CD4-positive, alpha-beta T cell (primary cell): ENCODE measurements at regions of chr3 and their contacts with region 1.

Region 1: DNA sequence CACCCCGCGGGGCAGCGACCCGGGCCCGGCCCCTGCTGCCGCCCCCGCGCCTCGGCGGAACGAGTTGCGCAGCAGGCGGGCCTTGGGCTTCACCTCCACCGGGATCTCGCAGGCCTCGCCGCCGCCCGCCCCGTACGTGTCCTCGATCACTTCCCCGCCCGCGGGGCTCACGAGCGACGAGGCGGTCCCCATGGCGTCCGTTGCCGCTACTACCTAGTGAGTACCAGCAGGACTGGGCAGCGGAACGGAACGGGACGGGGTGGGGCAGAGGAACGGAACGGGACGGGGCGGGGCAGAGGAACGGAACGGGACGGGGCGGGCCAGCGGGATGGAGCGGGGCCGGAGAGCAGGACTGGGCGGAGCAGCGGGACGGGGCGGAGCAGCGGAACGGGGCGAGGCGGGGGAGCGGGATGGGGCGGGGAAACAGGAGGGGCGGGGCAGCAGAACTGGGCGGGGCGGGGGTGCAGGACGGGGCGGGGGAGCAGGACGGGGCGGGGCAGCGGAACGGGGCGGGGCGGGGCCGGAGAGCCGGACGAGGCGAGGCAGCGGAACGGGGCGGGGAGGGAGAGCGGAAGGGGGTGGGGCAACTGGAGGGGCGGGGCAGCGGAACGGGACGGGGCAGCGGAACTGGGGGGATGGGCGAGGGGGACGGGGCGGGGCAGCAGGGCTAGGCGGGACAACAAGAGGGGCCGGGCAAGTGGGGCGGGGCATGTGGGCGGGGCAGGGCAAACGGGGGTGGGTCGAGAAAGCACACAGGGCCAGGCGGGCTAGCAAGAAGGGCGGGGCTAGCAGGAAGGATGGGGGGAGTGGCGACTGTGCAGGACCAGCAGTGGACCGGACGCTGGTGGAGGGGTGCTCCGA is at the start of gene NPHP3:
- DNase-seq: peak; percentile 90 to 100 (median 98)
- ATAC-seq: peak; percentile 77
- H3K4me3 ChIP-seq: peak within 1 kb of the TSS; percentile 89
- H3K4me3 Mint-ChIP-seq: peak within 1 kb of the TSS; percentile 96
- H3K27ac ChIP-seq: peak within 1 kb of the TSS; percentile 43 to 46
- H3K27ac Mint-ChIP-seq: peak within 1 kb of the TSS; percentile 93
- H3K4me1 ChIP-seq: peaks cover 25% of the 10 kb centered on the region
- H3K4me1 Mint-ChIP-seq: peaks cover 50% of the 10 kb centered on the region
- H3K27me3 ChIP-seq: no peaks in the 10 kb centered on the region
- H3K27me3 Mint-ChIP-seq: no peaks in the 10 kb centered on the region
- CTCF ChIP-seq: no peak
- total RNA-seq, gene NPHP3: 25.5 to 27.4 TPM

Region 2: DNA sequence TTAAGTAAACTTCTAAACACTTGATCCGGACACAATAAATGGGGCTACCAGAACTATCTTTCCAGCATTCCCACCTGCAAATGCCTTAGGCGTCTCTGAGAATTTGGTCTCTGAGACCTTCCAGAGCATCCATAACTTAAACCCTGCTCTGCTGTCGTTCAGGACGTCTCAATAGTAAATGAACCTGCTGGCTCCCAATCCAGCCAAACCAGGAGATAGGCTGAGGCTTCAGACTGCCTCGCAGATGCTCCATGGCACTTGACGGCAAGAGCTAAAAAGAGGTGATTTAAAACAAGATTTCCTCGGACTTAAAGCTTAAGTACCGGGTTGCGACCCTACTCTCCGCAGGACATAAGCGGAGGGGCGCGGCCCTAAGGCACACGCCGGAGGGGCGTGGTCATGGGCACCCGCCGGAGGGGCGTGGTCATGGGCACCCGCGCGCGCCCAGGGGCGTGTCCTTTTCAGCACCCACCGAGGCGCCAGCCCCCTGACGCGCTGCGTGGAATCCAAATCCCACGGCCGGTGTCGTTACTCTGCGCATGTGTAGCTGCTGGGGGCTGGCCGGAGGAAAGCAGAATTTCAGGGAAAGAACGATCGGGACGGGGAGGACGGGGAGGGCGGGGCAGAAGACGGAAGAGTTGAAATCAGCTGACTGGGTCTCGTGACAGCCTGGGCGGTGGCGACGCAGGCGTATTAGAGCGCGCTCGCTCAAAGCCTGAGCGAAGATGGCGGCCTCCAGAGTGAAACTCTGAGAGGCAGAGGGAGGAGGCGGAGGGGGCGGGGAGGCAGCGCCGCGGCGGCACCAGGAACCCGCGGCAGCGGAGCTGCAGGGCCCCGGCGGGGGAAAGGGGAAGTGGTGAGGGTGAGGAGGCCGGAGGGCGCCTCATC is 305.3 kb before region 1 on chr3 and contains the start of gene DNAJC13:
- CTCF ChIA-PET with region 1: interaction called, 3 read pairs
- POLR2A ChIA-PET with region 1: interaction called, 3 read pairs
- intact Hi-C with region 1: loop called in 1 of 2 experiments (anchors 2 kb)
- DNase-seq: peak; percentile 81 to 98 (median 89)
- ATAC-seq: peak; percentile 93
- H3K4me3 ChIP-seq: peak within 1 kb of the TSS; percentile 91
- H3K4me3 Mint-ChIP-seq: peak within 1 kb of the TSS; percentile 97
- H3K27ac ChIP-seq: peak within 1 kb of the TSS; percentile 76 to 81
- H3K27ac Mint-ChIP-seq: peak within 1 kb of the TSS; percentile 91
- H3K4me1 ChIP-seq: peaks cover 12% of the 10 kb centered on the region
- H3K4me1 Mint-ChIP-seq: peaks cover 34% of the 10 kb centered on the region
- H3K27me3 ChIP-seq: no peaks in the 10 kb centered on the region
- H3K27me3 Mint-ChIP-seq: no peaks in the 10 kb centered on the region
- CTCF ChIP-seq: no peak
- total RNA-seq, gene DNAJC13: 13.5 to 14.3 TPM

Region 3: GRCh38 chr3:132554437-132554836 is 168.0 kb before region 1 on chr3:
- CTCF ChIA-PET with region 1: no interaction called
- POLR2A ChIA-PET with region 1: no interaction called
- intact Hi-C with region 1: no loop called
- DNase-seq: no peak
- ATAC-seq: no peak
- H3K4me3 ChIP-seq: no peak overlapping the region
- H3K4me3 Mint-ChIP-seq: no peak overlapping the region
- H3K27ac ChIP-seq: no peak overlapping the region
- H3K27ac Mint-ChIP-seq: no peak overlapping the region
- H3K4me1 ChIP-seq: no peaks in the 10 kb centered on the region
- H3K4me1 Mint-ChIP-seq: peaks cover 21% of the 10 kb centered on the region
- H3K27me3 ChIP-seq: no peaks in the 10 kb centered on the region
- H3K27me3 Mint-ChIP-seq: no peaks in the 10 kb centered on the region
- CTCF ChIP-seq: no peak

Region 4: GRCh38 chr3:133014311-133014710 is 291.9 kb after region 1 on chr3:
- CTCF ChIA-PET with region 1: no interaction called
- POLR2A ChIA-PET with region 1: no interaction called
- intact Hi-C with region 1: no loop called
- DNase-seq: no peak
- ATAC-seq: no peak
- H3K4me3 ChIP-seq: no peak overlapping the region
- H3K4me3 Mint-ChIP-seq: no peak overlapping the region
- H3K27ac ChIP-seq: no peak overlapping the region
- H3K27ac Mint-ChIP-seq: no peak overlapping the region
- H3K4me1 ChIP-seq: no peaks in the 10 kb centered on the region
- H3K4me1 Mint-ChIP-seq: no peaks in the 10 kb centered on the region
- H3K27me3 ChIP-seq: peaks cover 0 to 4% of the 10 kb centered on the region in 2 experiments
- H3K27me3 Mint-ChIP-seq: peaks cover 6% of the 10 kb centered on the region
- CTCF ChIP-seq: no peak

Region 5: GRCh38 chr3:133494469-133494868 is 772.1 kb after region 1 on chr3:
- CTCF ChIA-PET with region 1: no interaction called
- POLR2A ChIA-PET with region 1: interaction called, 4 read pairs
- intact Hi-C with region 1: loop called in 1 of 2 experiments (anchors 5 kb)
- DNase-seq: peak in 2 of 14 experiments; percentile 12 to 22
- ATAC-seq: no peak
- H3K4me3 ChIP-seq: no peak overlapping the region
- H3K4me3 Mint-ChIP-seq: no peak overlapping the region
- H3K27ac ChIP-seq: no peak overlapping the region
- H3K27ac Mint-ChIP-seq: peak overlapping the region; percentile 63
- H3K4me1 ChIP-seq: peaks cover 45% of the 10 kb centered on the region
- H3K4me1 Mint-ChIP-seq: peaks cover 63% of the 10 kb centered on the region
- H3K27me3 ChIP-seq: no peaks in the 10 kb centered on the region
- H3K27me3 Mint-ChIP-seq: no peaks in the 10 kb centered on the region
- CTCF ChIP-seq: no peak

Region 6: DNA sequence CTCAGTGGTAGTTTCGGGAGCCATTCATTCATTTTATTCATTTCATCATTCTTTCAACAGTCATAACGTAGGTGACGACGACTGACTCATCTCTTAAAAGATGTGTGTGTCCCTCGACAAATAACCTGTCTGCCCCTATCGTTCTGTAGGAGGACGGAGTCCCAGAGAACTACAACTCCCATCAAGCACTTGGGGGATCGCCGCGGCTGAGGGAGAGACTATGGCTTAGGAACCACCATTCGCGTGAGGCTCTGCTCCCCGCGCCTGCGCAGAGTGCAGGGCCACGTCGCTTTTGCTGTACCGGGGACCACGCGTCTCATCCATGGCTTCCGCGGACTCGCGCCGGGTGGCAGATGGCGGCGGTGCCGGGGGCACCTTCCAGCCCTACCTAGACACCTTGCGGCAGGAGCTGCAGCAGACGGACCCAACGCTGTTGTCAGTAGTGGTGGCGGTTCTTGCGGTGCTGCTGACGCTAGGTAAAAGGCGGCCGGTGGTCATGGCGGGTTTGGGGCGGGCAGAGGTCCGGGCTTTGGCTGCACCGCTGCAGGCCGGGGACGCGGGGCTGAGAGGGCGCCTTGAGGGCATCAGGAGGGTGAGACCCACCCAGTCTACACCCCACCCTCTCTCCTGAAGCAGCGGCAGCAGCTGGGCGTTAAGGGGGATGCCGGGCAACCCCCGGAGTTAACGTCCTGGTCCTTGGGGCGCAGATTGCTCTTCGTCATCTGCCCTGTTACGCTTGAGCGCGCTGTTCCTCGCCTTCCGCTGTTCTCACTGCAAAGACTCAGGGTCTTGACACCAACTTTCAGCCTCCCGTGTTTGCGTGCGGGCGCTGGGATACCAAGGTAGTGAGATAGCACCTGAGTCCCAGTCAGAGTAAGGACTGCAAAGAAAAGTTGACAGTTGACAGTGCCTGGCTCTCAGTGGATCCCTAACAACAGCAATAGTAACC is 1083.4 kb after region 1 on chr3 and contains the start of gene SRPRB:
- CTCF ChIA-PET with region 1: no interaction called
- POLR2A ChIA-PET with region 1: no interaction called
- intact Hi-C with region 1: loop called in 1 of 2 experiments (anchors 2 kb)
- DNase-seq: peak; percentile 90 to 99 (median 94)
- ATAC-seq: peak; percentile 95
- H3K4me3 ChIP-seq: peak within 1 kb of the TSS; percentile 92
- H3K4me3 Mint-ChIP-seq: peak within 1 kb of the TSS; percentile 97
- H3K27ac ChIP-seq: peak within 1 kb of the TSS; percentile 70 to 75
- H3K27ac Mint-ChIP-seq: peak within 1 kb of the TSS; percentile 94
- H3K4me1 ChIP-seq: peaks cover 16% of the 10 kb centered on the region
- H3K4me1 Mint-ChIP-seq: peaks cover 40% of the 10 kb centered on the region
- H3K27me3 ChIP-seq: no peaks in the 10 kb centered on the region
- H3K27me3 Mint-ChIP-seq: no peaks in the 10 kb centered on the region
- CTCF ChIP-seq: no peak
- total RNA-seq, gene SRPRB: 19.1 to 19.9 TPM

Region 7: GRCh38 chr3:133927540-133928066 is 1205.2 kb after region 1 on chr3:
- CTCF ChIA-PET with region 1: interaction called, 5 read pairs
- POLR2A ChIA-PET with region 1: no interaction called
- intact Hi-C with region 1: loop called in 1 of 2 experiments (anchors 1 kb)
- DNase-seq: peak; percentile 47 to 90 (median 68)
- ATAC-seq: peak; percentile 97
- H3K4me3 ChIP-seq: peak overlapping the region; percentile 51
- H3K4me3 Mint-ChIP-seq: peak overlapping the region; percentile 80
- H3K27ac ChIP-seq: no peak overlapping the region
- H3K27ac Mint-ChIP-seq: no peak overlapping the region
- H3K4me1 ChIP-seq: peaks cover 14% of the 10 kb centered on the region
- H3K4me1 Mint-ChIP-seq: peaks cover 7% of the 10 kb centered on the region
- H3K27me3 ChIP-seq: peaks cover 0 to 9% of the 10 kb centered on the region in 2 experiments
- H3K27me3 Mint-ChIP-seq: peaks cover 18% of the 10 kb centered on the region
- CTCF ChIP-seq: peak; percentile 54

Region 8: DNA sequence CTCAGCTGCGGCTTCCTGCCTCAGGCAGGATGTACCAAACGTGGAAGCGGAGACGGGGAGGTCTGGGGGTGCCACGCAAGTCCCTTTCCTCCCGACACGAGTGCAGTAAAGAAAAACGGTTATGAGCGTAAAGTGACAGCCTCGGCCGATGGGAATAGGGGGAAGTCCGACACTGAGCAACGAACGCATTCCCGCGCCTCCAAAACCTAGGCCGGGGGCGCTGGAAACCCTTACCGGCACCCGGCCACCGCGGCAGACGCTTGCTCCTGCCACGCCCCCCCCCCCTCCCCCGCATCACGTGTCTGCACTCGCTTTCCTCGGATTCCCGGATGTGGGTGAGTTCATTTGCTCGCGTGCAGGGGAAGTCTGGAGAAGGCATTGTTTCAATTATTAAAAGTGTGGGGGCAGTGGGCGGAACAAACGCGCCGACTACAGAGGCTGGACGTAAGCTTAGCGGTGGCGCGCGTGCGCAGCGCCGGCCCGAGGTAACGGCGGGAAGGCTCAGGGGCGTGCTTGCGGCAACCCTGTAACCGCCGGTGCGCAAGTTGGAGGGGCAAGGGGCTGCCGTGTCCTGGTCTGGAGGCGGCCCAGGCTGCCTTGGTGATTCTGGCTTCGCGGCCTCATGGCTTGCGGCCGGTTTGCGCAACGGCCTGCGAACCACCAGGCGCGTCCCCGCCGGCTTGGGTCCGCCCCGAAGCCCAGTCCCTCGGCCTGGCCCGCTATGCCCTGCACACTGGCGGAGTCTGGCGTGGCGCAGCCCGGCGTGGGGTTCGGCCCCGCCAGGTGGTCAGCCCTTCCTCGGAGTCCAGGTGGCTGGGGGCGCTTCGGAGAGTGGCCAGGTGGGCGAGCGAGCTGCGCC is 1763.6 kb after region 1 on chr3 and contains the starts of genes ANAPC13 and CEP63:
- CTCF ChIA-PET with region 1: no interaction called
- POLR2A ChIA-PET with region 1: interaction called, 6 read pairs
- intact Hi-C with region 1: loop called (anchors 5 kb)
- DNase-seq: peak; percentile 84 to 99 (median 90)
- ATAC-seq: peak; percentile 76
- H3K4me3 ChIP-seq: peak within 1 kb of the TSS; percentile 96
- H3K4me3 Mint-ChIP-seq: peak within 1 kb of the TSS; percentile 100
- H3K27ac ChIP-seq: peak within 1 kb of the TSS; percentile 86 to 95
- H3K27ac Mint-ChIP-seq: peak within 1 kb of the TSS; percentile 98
- H3K4me1 ChIP-seq: peaks cover 29% of the 10 kb centered on the region
- H3K4me1 Mint-ChIP-seq: peaks cover 71% of the 10 kb centered on the region
- H3K27me3 ChIP-seq: no peaks in the 10 kb centered on the region
- H3K27me3 Mint-ChIP-seq: no peaks in the 10 kb centered on the region
- CTCF ChIP-seq: no peak
- total RNA-seq, gene ANAPC13: 12.9 to 16.8 TPM
- total RNA-seq, gene CEP63: 13.2 to 15.1 TPM